H1 (cell line): ENCODE measurements at regions of chr1 and their contacts with region 1.

Region 1: DNA sequence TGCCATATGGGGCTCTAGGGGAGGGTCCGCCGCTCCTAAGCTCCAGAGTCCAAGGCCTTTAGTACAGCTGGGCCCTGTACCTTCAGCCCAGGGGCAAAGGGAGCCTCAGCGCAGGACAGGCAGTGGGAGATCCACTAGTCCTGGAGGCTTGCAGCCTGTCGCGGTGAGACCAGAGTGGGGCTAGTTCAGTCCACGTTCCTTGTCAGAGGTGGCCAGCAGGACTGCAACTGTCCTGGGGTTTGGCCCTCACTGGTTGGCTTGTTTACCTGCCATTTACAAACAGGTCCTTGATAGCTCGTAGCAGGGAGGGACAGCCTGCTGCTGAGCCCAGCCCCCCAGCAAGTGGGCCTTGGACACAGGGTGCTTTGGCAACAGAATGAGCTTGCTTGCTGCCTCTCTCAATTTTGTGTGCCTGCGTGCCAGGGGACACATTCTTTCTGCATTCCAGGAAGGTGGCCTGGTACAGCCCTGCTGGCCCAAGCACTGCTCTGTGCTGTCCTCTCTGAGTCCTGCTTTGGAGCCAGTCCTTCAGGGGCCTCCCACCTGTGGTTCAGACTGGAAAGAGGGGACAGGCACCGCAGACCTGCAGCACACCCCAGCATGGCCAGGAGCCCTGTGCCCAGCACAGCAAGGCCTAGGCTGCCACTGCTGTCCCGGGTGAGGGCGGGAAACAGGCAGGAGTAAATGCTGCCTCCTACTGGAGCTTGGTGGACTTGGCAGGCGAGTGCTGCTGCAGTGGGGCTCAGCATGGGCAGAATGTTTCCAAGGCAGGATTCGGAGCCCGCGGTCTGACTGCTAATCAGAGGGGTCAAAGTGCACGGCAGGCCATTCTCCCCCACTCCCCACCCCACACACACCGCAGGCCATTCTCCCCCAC is 15.2 kb downstream of the H6PD start:
- DNase-seq: peak in 1 of 2 experiments; percentile 87
- H3K4me3 ChIP-seq: no peak overlapping the region
- H3K27ac ChIP-seq: no peak overlapping the region; the same call in none of the 2 replicates
- H3K4me1 ChIP-seq: peaks cover 17 to 37% (median 30%) of the 10 kb centered on the region in 4 experiments
- H3K27me3 ChIP-seq: no peaks in the 10 kb centered on the region; a peak in 1 of 7 replicates
- CTCF ChIP-seq: peak; percentile 90 to 99 (median 98)
- EP300 ChIP-seq: no peak
- POLR2A ChIP-seq: no peak
- RAD21 ChIP-seq: peak; percentile 80 to 87

Region 2: DNA sequence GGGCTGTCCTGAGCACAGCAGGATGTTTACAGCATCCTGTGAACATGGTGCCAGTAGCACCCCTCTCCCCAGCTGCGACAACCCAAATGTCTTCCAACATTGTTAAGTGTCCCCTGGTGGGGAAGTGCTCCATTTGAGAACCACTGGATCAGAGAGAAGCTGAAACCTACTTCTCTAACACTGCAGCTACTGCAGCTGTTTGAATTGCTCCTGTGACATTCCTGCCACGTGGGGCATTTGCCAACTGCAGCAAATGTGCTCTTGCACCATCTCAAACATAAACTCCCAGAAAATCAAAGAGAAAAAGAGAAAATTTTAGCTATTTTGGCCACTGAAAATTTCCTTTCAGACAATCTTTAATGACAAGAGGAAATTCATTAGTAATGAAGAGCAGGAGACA is 191.3 kb before region 1 on chr1:
- CTCF ChIA-PET with region 1: no interaction called
- POLR2A ChIA-PET with region 1: no interaction called
- DNase-seq: no peak
- H3K4me3 ChIP-seq: no peak overlapping the region
- H3K27ac ChIP-seq: no peak overlapping the region
- H3K4me1 ChIP-seq: no peaks in the 10 kb centered on the region; a peak in 2 of 7 replicates
- H3K27me3 ChIP-seq: no peaks in the 10 kb centered on the region
- CTCF ChIP-seq: peak in 1 of 3 experiments; percentile 10; a peak in 1 of 4 replicates
- EP300 ChIP-seq: no peak
- POLR2A ChIP-seq: no peak
- RAD21 ChIP-seq: no peak

Region 3: GRCh38 chr1:9234223-9235095 is 15.3 kb before region 1 on chr1 and contains the start of gene H6PD:
- CTCF ChIA-PET with region 1: interaction called, 127 read pairs
- POLR2A ChIA-PET with region 1: interaction called, 8 read pairs
- DNase-seq: peak in 1 of 2 experiments; percentile 86
- H3K4me3 ChIP-seq: peak within 1 kb of the TSS; percentile 54 to 77 (median 60)
- H3K27ac ChIP-seq: peak within 1 kb of the TSS; percentile 86; the same call in 1 of the 2 replicates
- H3K4me1 ChIP-seq: peaks cover 0 to 4% (median 3%) of the 10 kb centered on the region in 4 experiments; a peak in 3 of 7 replicates
- H3K27me3 ChIP-seq: no peaks in the 10 kb centered on the region
- CTCF ChIP-seq: peak; percentile 39 to 54 (median 41)
- EP300 ChIP-seq: no peak
- POLR2A ChIP-seq: peak in 1 of 2 experiments; percentile 82; a peak in 2 of 3 replicates
- RAD21 ChIP-seq: peak in 1 of 2 experiments; percentile 1; a peak in 1 of 4 replicates
- total RNA-seq, gene H6PD: 3.8 and 4.0 TPM in 2 replicates

Region 4: GRCh38 chr1:9270290-9270883 is 20.6 kb after region 1 on chr1:
- CTCF ChIA-PET with region 1: interaction called, 118 read pairs
- POLR2A ChIA-PET with region 1: interaction called, 3 read pairs
- DNase-seq: peak in 1 of 2 experiments; percentile 53
- H3K4me3 ChIP-seq: no peak overlapping the region
- H3K27ac ChIP-seq: no peak overlapping the region
- H3K4me1 ChIP-seq: peaks cover 0 to 4% (median 1%) of the 10 kb centered on the region in 4 experiments; a peak in 5 of 7 replicates
- H3K27me3 ChIP-seq: no peaks in the 10 kb centered on the region; a peak in 1 of 7 replicates
- CTCF ChIP-seq: no peak
- EP300 ChIP-seq: no peak
- POLR2A ChIP-seq: no peak
- RAD21 ChIP-seq: no peak

Region 5: DNA sequence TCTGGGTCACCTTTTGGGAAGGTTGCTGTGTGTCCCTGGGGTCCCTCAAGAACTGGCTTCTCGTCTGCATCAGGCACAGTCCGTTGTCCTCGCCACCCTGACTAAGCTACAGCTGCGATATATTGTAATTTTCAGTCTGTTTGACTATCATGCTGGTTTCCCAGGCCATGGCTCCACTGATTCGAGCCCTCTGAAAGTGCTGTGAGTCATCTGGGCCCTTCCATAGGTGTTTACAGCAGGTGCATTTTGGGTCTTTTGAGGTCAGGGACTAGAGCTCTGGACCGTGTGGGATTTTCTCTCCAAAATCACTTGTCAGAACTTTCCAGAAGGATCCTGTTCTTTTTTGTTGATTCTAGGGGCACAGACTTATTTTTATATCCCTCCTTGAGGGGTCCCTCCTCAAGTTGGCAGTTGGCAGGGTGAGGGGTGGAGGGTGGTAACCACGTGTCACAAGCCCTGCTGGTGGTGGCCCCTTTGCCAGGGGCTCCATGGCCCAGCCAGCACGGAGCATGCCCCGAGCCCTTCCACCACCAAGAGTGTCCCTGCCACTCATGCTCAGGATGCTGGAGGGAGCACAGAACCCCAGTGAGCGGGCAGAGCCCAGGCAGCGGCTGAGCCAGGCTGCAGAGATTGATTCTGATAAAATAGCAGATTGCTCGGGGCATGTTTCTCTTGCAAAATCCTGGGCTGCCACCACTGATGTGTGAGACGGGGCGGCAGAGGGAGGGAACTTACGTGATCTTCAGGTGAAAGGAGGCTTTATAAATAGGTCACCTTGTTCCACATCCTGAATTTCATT is 95.9 kb after region 1 on chr1:
- CTCF ChIA-PET with region 1: no interaction called
- POLR2A ChIA-PET with region 1: no interaction called
- DNase-seq: no peak
- H3K4me3 ChIP-seq: no peak overlapping the region
- H3K27ac ChIP-seq: no peak overlapping the region
- H3K4me1 ChIP-seq: peaks cover 2 to 7% (median 3%) of the 10 kb centered on the region in 4 experiments; a peak in 6 of 7 replicates
- H3K27me3 ChIP-seq: no peaks in the 10 kb centered on the region; a peak in 1 of 7 replicates
- CTCF ChIP-seq: no peak
- EP300 ChIP-seq: no peak
- POLR2A ChIP-seq: no peak
- RAD21 ChIP-seq: no peak

Region 6: DNA sequence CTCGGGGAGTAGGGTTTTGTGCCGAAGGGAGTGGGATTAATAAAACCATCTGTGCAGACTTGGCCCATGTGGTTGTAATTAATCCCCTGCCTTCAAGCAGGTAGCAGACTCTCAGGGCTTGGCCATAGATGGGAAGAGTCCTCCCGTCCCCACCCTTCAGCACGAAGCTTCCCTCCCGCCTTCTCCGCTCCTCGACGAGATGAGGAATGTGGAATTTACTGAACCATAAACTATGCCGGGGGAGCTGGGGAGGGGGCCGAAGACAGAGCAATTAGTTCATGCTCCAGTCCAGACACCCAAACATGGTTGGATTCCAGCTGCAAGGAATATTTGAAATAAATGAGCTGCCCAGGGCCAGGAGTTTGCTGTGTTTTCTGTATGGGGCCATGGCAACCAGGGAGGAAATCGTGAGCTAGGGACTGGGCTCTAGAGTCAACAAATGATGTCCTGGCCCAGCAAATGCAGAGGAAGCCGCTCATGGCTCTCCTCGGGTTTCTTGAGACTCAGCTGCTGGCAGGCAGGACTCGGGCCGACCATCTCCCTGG is 121.7 kb after region 1 on chr1:
- CTCF ChIA-PET with region 1: no interaction called
- POLR2A ChIA-PET with region 1: no interaction called
- DNase-seq: no peak
- H3K4me3 ChIP-seq: no peak overlapping the region
- H3K27ac ChIP-seq: no peak overlapping the region
- H3K4me1 ChIP-seq: no peaks in the 10 kb centered on the region; a peak in 2 of 7 replicates
- H3K27me3 ChIP-seq: no peaks in the 10 kb centered on the region
- CTCF ChIP-seq: no peak
- EP300 ChIP-seq: no peak
- POLR2A ChIP-seq: no peak
- RAD21 ChIP-seq: no peak